ENCODE measurements at regions of chr9 and their contacts with region 1.

Region 1: GRCh38 chr9:26870292-26870691 is 22.3 kb downstream of the CAAP1 start:
- DNase-seq: no peak
- H3K4me3 Mint-ChIP-seq: no peak overlapping the region
- H3K27ac Mint-ChIP-seq: no peak overlapping the region
- H3K4me1 Mint-ChIP-seq: no peaks in the 10 kb centered on the region
- H3K27me3 Mint-ChIP-seq: no peaks in the 10 kb centered on the region

Region 2: GRCh38 chr9:26975693-26976059 is 105.4 kb after region 1 on chr9:
- CTCF ChIA-PET with region 1: no interaction called
- POLR2A ChIA-PET with region 1: no interaction called
- intact Hi-C with region 1: loop called (anchors 5 kb)
- DNase-seq: no peak
- H3K4me3 Mint-ChIP-seq: no peak overlapping the region
- H3K27ac Mint-ChIP-seq: no peak overlapping the region
- H3K4me1 Mint-ChIP-seq: no peaks in the 10 kb centered on the region
- H3K27me3 Mint-ChIP-seq: no peaks in the 10 kb centered on the region